Activated B cell treated with CpG ODN at 0.5 μM for 24 hours (primary cell): ENCODE measurements at regions of chr14 and their contacts with region 1.

Region 1: DNA sequence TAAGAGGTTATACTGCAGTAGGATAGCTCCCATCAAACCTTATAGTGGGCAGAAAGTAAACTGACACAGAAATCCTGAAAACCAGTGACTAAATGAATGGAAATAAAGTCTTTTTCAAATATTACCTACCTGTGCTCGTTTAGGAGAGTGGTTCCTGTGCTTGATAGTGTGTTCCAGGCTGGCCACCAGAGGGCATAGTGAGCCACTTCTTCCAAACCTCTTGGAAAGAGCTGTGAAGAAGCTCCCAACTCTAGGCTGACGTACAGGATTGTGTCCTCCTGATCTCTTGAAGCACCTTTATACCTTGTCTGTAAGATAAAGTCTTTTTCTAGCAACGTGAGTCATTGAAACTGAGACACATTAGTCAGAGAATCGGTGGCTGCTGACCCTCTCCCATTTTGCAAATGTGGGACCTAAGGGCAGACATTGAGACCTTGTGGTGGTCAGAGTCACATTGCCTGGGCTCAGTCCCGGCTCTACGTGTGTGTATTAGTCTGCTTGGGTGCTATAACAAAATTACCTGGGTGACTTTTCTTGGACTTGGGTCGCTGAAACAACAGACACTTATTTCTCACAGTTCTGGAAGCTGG is 17.6 kb downstream of the TDP1 start:
- DNase-seq: no peak
- ATAC-seq: peak; percentile 60
- H3K4me3 Mint-ChIP-seq: no peak overlapping the region
- H3K27ac Mint-ChIP-seq: no peak overlapping the region
- H3K4me1 Mint-ChIP-seq: no peaks in the 10 kb centered on the region
- H3K27me3 Mint-ChIP-seq: no peaks in the 10 kb centered on the region
- CTCF ChIP-seq: peak; percentile 83

Region 2: GRCh38 chr14:89936658-89937185 is 36.6 kb before region 1 on chr14:
- CTCF ChIA-PET with region 1: interaction called, 22 read pairs
- POLR2A ChIA-PET with region 1: no interaction called
- intact Hi-C with region 1: no loop called
- DNase-seq: no peak
- ATAC-seq: no peak
- H3K4me3 Mint-ChIP-seq: no peak overlapping the region
- H3K27ac Mint-ChIP-seq: no peak overlapping the region
- H3K4me1 Mint-ChIP-seq: no peaks in the 10 kb centered on the region
- H3K27me3 Mint-ChIP-seq: no peaks in the 10 kb centered on the region
- CTCF ChIP-seq: no peak

Region 3: DNA sequence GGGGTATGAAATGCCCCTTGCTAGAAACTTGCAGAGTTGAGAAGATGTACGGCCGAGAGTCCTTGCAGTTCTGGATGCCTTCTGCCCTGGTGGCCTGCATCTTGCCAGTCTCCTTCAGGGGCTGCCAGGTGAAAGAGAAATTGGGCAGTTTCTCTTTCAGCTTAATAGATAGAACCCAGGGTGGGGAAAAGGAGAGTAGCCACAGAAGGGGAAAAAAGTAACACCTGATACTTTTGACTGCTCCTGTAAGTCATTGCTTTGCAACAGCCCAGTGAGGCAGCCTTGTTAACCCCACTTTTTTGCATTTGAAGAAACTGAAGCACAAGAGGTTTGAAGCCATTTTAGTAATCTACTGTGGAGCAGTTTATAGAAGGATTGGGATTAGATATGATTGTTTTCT is 10.0 kb after region 1 on chr14:
- CTCF ChIA-PET with region 1: interaction called, 18 read pairs
- POLR2A ChIA-PET with region 1: no interaction called
- intact Hi-C with region 1: no loop called
- DNase-seq: no peak
- ATAC-seq: no peak
- H3K4me3 Mint-ChIP-seq: no peak overlapping the region
- H3K27ac Mint-ChIP-seq: no peak overlapping the region
- H3K4me1 Mint-ChIP-seq: no peaks in the 10 kb centered on the region
- H3K27me3 Mint-ChIP-seq: no peaks in the 10 kb centered on the region
- CTCF ChIP-seq: no peak